ENCODE measurements at regions of chr14 and their contacts with region 1.

Region 1: DNA sequence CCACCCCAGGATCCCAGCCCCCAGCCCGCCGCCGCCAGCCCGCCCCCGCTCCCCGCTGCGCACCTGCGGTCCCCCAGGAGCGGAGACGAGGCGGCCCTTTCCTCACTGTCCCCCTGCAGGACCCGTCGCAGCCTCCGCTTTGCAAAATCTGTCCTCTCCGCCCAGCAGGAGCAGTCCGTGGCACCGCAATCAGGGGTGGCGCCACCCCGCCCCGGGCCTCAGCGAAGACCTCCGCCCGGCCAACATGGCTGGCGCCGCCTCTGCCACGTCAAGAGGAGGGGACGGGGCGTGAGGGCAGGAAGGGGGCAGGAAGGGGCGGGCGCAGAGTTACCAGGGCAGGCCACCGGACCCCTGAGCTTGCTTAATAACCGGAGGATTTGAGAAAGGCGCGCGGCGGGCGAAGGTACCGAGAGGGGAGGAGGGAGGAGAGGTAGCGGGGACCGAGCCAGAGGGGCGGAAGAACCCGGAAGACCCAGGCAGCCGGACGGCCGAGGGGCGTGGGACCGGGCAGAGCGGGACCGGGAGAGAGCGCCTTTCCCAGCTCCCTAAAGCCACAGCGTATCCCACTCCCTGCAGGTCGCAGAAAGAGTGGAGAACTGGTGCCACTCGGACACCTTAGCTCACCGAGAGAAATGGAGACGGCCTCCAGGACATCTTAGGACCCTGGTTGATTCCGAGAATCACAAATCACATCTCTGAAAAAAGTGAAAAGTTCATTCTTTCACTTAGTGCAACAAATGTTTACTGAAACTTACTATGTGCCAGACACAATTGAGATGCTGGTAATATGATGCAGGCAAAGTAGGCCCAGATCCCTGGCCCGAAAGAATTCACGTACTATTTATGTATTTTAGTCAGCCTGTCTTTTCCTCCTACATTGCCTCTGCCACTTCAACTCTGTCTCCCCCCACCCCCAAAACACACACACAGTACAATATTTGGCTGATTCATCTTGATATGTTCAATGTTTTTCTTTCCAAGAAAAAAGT is at the start of gene SEC23A:
- DNase-seq: peak; percentile 52
- H3K4me3 ChIP-seq: peak within 1 kb of the TSS; percentile 80
- H3K27ac ChIP-seq: peak within 1 kb of the TSS; percentile 94
- H3K27me3 ChIP-seq: no peaks in the 10 kb centered on the region
- CTCF ChIP-seq: no peak
- polyA plus RNA-seq, gene SEC23A: 289 and 310 TPM in 2 replicates

Region 2: GRCh38 chr14:39114073-39114838 is 11.0 kb after region 1 on chr14 and contains the start of gene GEMIN2:
- CTCF ChIA-PET with region 1: interaction called, 6 read pairs
- POLR2A ChIA-PET with region 1: interaction called, 18 read pairs
- DNase-seq: peak; percentile 84
- H3K4me3 ChIP-seq: peak within 1 kb of the TSS; percentile 74
- H3K27ac ChIP-seq: no peak within 1 kb of the TSS
- H3K27me3 ChIP-seq: no peaks in the 10 kb centered on the region
- CTCF ChIP-seq: no peak
- polyA plus RNA-seq, gene GEMIN2: 9.7 and 15.4 TPM in 2 replicates

Region 3: GRCh38 chr14:39169541-39169900 is 66.3 kb after region 1 on chr14:
- CTCF ChIA-PET with region 1: no interaction called
- POLR2A ChIA-PET with region 1: interaction called, 19 read pairs
- DNase-seq: no peak
- H3K4me3 ChIP-seq: peak overlapping the region; percentile 95
- H3K27ac ChIP-seq: peak overlapping the region; percentile 98
- H3K27me3 ChIP-seq: no peaks in the 10 kb centered on the region
- CTCF ChIP-seq: no peak

Region 4: DNA sequence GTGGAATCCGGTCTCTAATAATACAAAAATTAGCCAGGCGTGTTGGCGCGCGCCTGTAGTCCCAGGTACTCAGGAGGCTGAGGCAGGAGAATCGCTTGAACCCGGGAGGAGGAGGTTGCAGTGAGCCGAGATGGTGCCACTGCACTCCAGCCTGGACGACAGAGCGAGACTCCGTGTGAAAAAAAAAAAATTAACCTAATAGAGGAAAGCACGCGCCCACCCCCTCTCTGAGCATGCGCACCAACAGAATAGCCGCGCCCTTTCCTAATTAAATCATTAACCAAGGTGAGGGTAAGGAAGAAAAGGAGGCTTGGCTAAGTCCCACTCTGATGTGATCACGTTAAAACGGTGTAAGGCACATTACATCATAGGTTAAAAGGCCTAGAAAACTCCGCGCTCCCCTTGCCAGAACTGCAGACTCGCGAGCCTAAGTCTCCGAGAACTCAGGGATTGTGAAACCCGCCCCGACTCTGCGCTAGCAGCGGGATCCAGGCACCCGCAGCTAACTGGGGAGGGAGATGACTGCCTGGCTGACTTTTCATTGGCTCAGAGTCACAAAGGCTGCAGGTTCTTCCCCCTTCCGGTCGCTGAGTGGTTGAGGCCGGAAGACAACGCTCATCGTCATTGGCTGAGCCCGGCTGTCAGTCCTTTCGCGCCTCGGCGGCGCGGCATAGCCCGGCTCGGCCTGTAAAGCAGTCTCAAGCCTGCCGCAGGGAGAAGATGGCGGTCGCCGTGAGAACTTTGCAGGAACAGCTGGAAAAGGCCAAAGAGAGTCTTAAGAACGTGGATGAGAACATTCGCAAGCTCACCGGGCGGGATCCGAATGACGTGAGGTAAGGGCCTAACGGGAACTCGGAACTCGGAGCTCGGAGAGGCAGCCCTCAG is 71.5 kb after region 1 on chr14 and contains the start of gene PNN:
- CTCF ChIA-PET with region 1: no interaction called
- POLR2A ChIA-PET with region 1: interaction called, 19 read pairs
- DNase-seq: peak; percentile 99
- H3K4me3 ChIP-seq: peak within 1 kb of the TSS; percentile 91
- H3K27ac ChIP-seq: peak within 1 kb of the TSS; percentile 87
- H3K27me3 ChIP-seq: no peaks in the 10 kb centered on the region
- CTCF ChIP-seq: no peak
- polyA plus RNA-seq, gene PNN: 18.5 and 19.7 TPM in 2 replicates

Region 5: DNA sequence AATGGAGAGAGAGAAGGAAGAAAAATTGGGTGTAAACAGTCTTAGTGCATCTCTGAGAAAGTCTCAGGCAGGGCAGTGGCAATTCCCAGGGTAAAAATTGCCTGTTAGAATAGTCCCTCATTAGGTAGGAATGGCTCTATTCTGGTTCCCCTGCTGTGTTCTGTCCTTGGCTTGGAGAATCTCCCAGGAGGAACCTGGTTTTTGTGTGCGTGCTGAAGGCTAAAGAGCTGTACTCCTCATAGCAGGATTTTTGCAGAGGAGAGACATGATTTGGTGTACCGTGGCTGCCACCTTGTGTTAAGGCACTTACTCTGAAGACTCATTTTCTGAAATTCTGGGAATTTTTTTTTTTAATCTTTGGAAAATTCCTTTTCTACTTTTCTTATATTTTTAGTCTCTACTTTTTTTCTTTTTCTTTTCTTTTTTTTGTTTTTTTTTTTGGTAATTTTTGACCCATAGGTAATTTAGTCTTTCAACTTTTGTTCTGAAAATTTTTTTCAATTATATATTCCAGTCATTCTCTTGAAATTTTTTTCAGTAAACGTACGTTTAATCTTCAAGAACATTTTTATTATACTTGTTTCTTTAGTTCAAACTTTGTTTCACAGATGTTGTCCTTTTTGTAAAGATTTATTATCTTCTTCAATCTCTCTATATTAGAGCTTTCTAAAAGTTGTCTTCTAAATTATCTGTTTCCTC is 265.1 kb after region 1 on chr14:
- CTCF ChIA-PET with region 1: interaction called, 20 read pairs
- POLR2A ChIA-PET with region 1: interaction called, 3 read pairs
- DNase-seq: peak; percentile 48
- H3K4me3 ChIP-seq: no peak overlapping the region
- H3K27ac ChIP-seq: no peak overlapping the region
- H3K27me3 ChIP-seq: no peaks in the 10 kb centered on the region
- CTCF ChIP-seq: peak; percentile 68

Region 6: GRCh38 chr14:39426605-39427004 is 323.3 kb after region 1 on chr14:
- CTCF ChIA-PET with region 1: interaction called, 14 read pairs
- POLR2A ChIA-PET with region 1: no interaction called
- DNase-seq: no peak
- H3K4me3 ChIP-seq: no peak overlapping the region
- H3K27ac ChIP-seq: no peak overlapping the region
- H3K27me3 ChIP-seq: no peaks in the 10 kb centered on the region
- CTCF ChIP-seq: peak; percentile 36; the same call in 1 of the 2 replicates

Measured in AG04450 (cell line).